WTC11 (cell line): ENCODE measurements at regions of chr19 and their contacts with region 1.

Region 1: GRCh38 chr19:50922317-50922853 is 11.2 kb upstream of the KLK4 start:
- DNase-seq: peak; percentile 87
- ATAC-seq: peak; percentile 100
- H3K4me3 Mint-ChIP-seq: peak overlapping the region; percentile 18; the same call in 1 of the 2 replicates
- H3K27ac Mint-ChIP-seq: no peak overlapping the region
- H3K4me1 Mint-ChIP-seq: peaks cover 13% of the 10 kb centered on the region
- H3K27me3 Mint-ChIP-seq: peaks cover 7% of the 10 kb centered on the region
- CTCF ChIP-seq: peak; percentile 90

Region 2: GRCh38 chr19:50705422-50706019 is 216.9 kb before region 1 on chr19:
- CTCF ChIA-PET with region 1: interaction called, 33 read pairs
- POLR2A ChIA-PET with region 1: no interaction called
- DNase-seq: peak; percentile 62
- ATAC-seq: peak; percentile 82
- H3K4me3 Mint-ChIP-seq: no peak overlapping the region
- H3K27ac Mint-ChIP-seq: no peak overlapping the region
- H3K4me1 Mint-ChIP-seq: peaks cover 9% of the 10 kb centered on the region; the same call in 1 of the 2 replicates
- H3K27me3 Mint-ChIP-seq: peaks cover 38% of the 10 kb centered on the region
- CTCF ChIP-seq: peak; percentile 37

Region 3: GRCh38 chr19:50785329-50785728 is 137.1 kb before region 1 on chr19:
- CTCF ChIA-PET with region 1: interaction called, 19 read pairs
- POLR2A ChIA-PET with region 1: no interaction called
- DNase-seq: no peak
- ATAC-seq: no peak
- H3K4me3 Mint-ChIP-seq: no peak overlapping the region
- H3K27ac Mint-ChIP-seq: no peak overlapping the region; the same call in 1 of the 2 replicates
- H3K4me1 Mint-ChIP-seq: peaks cover 9% of the 10 kb centered on the region
- H3K27me3 Mint-ChIP-seq: peaks cover 50% of the 10 kb centered on the region
- CTCF ChIP-seq: no peak

Region 4: DNA sequence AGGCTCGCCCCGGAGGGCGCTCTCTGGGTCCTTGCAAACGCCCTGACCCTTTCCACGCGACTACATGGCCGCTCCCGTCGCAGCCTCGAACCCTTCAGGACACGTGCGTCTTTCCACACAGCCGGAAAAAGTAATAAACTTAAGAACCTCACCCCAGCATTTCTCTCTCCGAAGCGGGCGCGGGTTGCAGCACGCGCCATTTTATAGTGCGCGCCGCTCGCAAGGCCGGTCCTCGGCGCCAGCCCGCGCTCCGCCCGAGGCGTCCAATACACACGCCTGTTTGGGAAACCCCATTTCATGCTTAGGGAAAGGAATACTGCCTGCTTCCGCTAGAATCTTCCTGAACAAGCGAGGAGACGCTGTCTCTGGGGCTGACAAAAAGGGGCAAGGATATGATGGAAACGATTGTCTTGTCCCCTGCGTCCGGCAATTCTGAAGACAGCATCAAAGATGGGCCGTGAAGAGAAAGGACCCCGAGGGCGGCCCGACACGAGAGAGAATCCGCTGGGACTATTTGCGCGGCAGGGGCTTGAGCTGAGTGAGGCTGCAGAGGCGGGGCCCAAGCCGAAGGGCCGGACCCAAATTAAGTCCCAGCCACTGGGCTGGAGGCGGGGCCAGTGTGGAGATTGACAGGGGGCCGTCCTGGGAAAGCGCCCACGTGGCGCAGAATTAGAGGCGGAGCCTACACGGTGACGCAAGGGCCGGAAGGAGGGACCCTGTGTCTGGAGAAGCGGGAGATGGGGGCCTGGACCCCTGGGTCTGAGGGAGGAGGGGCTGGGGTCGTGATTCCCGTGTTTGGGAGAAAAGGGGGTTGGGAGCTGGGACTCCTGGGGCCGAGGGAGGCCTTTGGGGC is 117.7 kb before region 1 on chr19:
- CTCF ChIA-PET with region 1: interaction called, 13 read pairs
- POLR2A ChIA-PET with region 1: no interaction called
- DNase-seq: peak; percentile 98
- ATAC-seq: peak; percentile 96
- H3K4me3 Mint-ChIP-seq: peak overlapping the region; percentile 96
- H3K27ac Mint-ChIP-seq: peak overlapping the region; percentile 100
- H3K4me1 Mint-ChIP-seq: peaks cover 25% of the 10 kb centered on the region
- H3K27me3 Mint-ChIP-seq: peaks cover 28% of the 10 kb centered on the region
- CTCF ChIP-seq: no peak

Region 5: DNA sequence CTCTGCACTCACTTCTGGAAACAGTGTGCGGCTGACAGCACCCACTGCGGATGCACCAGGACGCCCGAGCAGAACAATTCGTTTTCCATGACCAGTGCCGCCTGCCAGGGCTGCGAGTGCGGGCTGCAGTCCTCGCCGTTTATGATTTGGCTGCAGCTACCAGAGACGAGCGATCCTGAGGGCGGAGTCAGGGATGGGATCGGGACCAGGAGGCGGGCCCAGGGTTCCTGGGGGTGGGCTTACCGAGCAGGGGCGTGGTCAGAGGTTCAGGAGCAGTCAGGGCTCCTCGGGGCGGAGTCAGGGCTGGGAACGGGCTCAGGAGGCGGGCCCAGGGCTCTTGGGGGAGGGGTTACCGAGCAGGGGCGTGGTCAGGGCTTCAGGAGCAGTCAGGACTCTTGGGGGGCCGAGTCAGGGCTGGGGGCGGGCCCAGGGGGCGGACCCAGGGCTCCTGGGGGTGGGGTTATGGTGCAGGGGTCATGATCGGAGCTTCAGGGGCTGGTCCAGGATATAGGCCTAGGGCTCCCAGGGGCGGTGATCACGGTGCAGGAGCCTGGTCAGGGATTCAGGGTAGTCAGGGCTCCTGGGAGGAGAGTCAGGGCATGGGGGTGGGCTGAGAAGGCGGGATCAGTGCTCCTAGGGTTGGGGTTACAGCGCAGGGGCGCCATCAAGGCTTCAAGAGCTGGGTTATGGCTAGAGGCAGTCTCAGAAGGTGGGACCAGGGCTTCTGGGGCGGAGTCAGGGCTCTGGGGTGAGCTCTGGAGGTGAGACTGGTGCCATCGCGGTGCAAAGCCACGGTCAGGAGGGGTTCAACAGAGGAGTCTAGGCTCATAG is 12.9 kb before region 1 on chr19:
- CTCF ChIA-PET with region 1: interaction called, 66 read pairs
- POLR2A ChIA-PET with region 1: no interaction called
- DNase-seq: peak; percentile 100
- ATAC-seq: peak; percentile 92
- H3K4me3 Mint-ChIP-seq: peak overlapping the region; percentile 78
- H3K27ac Mint-ChIP-seq: peak overlapping the region; percentile 36; the same call in 1 of the 2 replicates
- H3K4me1 Mint-ChIP-seq: peaks cover 20% of the 10 kb centered on the region
- H3K27me3 Mint-ChIP-seq: peaks cover 23% of the 10 kb centered on the region
- CTCF ChIP-seq: no peak

Region 6: DNA sequence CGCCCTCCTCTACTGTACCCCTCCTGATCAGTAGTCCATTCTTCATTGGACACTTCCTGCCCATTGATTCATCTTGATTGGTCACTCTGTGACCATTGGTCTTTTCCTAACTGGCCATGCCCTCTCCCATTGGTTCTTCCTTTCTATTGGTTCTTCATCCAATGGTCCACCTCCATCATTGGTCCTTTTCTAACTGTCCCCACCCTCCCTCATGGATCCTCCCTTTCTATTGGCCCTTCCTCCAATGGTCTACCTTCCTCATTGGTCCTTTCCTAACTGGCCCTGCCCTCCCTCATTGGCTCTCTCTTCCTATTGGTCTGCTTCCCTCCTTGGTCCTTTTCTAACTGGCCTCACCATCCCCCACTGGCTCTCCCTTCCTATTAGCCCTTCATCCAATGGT is 39.9 kb after region 1 on chr19:
- CTCF ChIA-PET with region 1: no interaction called
- POLR2A ChIA-PET with region 1: no interaction called
- DNase-seq: no peak
- ATAC-seq: no peak
- H3K4me3 Mint-ChIP-seq: no peak overlapping the region
- H3K27ac Mint-ChIP-seq: no peak overlapping the region
- H3K4me1 Mint-ChIP-seq: no peaks in the 10 kb centered on the region
- H3K27me3 Mint-ChIP-seq: peaks cover 54% of the 10 kb centered on the region
- CTCF ChIP-seq: no peak

Region 7: GRCh38 chr19:51016798-51017683 is 94.7 kb after region 1 on chr19:
- CTCF ChIA-PET with region 1: interaction called, 84 read pairs
- POLR2A ChIA-PET with region 1: interaction called, 3 read pairs
- DNase-seq: peak; percentile 92
- ATAC-seq: peak; percentile 62
- H3K4me3 Mint-ChIP-seq: peak overlapping the region; percentile 89
- H3K27ac Mint-ChIP-seq: no peak overlapping the region
- H3K4me1 Mint-ChIP-seq: peaks cover 16% of the 10 kb centered on the region
- H3K27me3 Mint-ChIP-seq: peaks cover 56% of the 10 kb centered on the region
- CTCF ChIP-seq: peak; percentile 81